Body of pancreas (tissue), 4 donors: ENCODE measurements at regions of chr11 and their contacts with region 1.

Region 1: GRCh38 chr11:67277231-67277961 is 11.1 kb downstream of the GRK2 start:
- DNase-seq: peak; percentile 42 to 87 (median 64)
- ATAC-seq: peak; percentile 41
- H3K4me3 ChIP-seq: no peak overlapping the region
- H3K27ac ChIP-seq: peak overlapping the region in 2 of 4 donors; percentile 65 to 79
- H3K4me1 ChIP-seq: peaks cover 54% of the 10 kb centered on the region
- H3K27me3 ChIP-seq: no peaks in the 10 kb centered on the region
- CTCF ChIP-seq: no peak
- POLR2A ChIP-seq: peak in 1 of 3 donors; percentile 27

Region 2: DNA sequence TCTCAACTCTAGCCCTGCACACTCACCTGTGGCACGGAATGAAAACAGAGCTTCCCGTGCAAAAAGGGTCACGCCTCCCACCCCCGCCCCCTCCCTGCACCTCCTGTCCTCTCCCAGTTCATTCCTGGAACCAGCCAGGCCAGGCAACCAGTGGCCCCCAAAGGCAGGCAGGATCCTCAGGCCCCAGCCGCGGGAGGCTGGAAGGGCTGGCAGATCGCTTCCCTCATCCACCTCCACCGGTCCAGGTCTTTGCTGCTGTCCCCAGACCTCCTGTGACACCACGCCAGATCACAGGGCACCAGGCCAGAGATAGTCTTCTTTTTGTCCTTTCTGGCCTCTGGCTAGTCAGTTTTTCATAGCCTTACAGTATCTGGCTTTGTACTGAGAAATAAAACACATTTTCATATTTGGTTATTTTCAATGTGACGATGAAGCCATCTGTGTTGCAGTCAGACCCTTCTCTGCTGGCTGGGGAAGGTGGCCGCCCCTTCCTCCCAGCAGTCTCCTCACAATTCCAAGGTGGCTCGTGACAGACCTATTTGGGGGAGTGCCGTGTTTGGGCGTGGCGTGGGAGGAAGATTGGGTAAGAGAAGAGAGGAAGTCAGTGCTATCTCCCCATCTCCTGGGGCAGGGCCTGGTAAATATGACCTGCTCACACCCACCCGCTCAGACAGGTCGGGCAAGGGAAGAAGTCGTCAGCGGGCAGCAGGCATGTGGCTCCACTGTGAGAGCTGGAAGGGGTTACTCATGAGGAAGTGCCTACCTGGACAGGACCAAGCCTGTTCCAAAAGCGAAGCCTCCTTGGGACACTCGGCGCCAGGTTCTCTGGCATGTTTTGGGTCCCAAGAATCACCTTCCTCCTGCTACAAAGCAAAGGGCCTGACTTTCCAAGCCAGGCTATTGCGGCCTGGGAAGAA is 35.0 kb after region 1 on chr11:
- intact Hi-C with region 1: loop called (anchors 5 kb)
- DNase-seq: peak in 2 of 4 donors; percentile 38 to 47
- ATAC-seq: no peak
- H3K4me3 ChIP-seq: no peak overlapping the region
- H3K27ac ChIP-seq: no peak overlapping the region
- H3K4me1 ChIP-seq: peaks cover 4% of the 10 kb centered on the region
- H3K27me3 ChIP-seq: no peaks in the 10 kb centered on the region
- CTCF ChIP-seq: no peak
- POLR2A ChIP-seq: no peak

Region 3: DNA sequence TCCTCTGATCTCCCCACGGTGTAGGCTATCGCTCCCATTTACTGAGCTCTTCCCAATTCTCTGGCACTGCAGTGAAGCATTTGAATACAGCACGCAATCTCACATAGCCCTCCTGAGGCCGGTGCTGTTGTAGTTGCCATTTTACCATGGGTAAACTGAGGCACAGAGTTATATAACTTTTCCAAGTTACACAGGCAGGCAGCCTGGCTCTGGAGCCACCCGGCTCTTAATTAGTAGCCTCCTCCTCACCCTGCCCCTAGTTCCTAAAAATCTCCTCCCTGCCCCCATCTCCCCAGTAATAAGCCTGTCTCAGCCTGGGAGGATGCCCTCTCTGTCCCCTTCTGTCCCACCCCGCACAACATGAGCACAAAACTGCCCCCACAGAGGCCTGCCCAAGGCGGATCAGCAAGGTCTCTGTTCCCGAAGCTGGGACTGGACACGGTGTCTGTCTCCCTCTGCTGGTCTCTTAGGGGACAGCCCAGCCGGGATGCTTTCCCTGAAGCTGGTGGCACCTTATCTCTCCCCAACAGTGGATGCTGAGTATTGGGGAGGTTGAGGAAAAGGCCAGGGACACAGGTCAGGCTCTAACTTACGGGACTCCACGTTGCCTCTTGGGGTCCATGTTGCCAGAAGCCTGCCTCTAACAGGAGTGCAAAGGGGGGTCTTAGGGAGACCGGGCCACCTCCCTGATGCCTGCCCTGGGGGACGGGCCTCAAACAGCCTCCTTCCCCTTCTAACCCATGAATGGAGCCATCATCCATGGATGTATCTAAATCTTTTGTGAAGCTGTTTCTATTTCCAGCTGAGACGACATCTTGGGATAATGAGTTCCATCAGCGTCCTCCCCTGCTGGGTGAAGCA is 105.1 kb after region 1 on chr11:
- intact Hi-C with region 1: loop called (anchors 5 kb)
- DNase-seq: peak; percentile 82 to 85 (median 84)
- ATAC-seq: peak; percentile 88
- H3K4me3 ChIP-seq: no peak overlapping the region
- H3K27ac ChIP-seq: no peak overlapping the region
- H3K4me1 ChIP-seq: no peaks in the 10 kb centered on the region
- H3K27me3 ChIP-seq: no peaks in the 10 kb centered on the region
- CTCF ChIP-seq: peak; percentile 92 to 98 (median 97)
- POLR2A ChIP-seq: no peak